A549 (cell line): ENCODE measurements at regions of chr4 and their contacts with region 1.

Region 1: GRCh38 chr4:1712216-1713002 is at the start of gene SLBP:
- DNase-seq: peak; percentile 92 to 97
- ATAC-seq: peak; percentile 86 to 92
- H3K4me3 ChIP-seq: peak within 1 kb of the TSS; percentile 85
- H3K27ac ChIP-seq: peak within 1 kb of the TSS; percentile 99 to 100
- H3K4me1 ChIP-seq: peaks cover 40% of the 10 kb centered on the region
- CTCF ChIP-seq: no peak
- EP300 ChIP-seq: no peak
- POLR2A ChIP-seq: peak; percentile 87
- RAD21 ChIP-seq: no peak
- polyA plus RNA-seq, gene SLBP: 66.7 and 89.9 TPM in 2 replicates

Region 2: DNA sequence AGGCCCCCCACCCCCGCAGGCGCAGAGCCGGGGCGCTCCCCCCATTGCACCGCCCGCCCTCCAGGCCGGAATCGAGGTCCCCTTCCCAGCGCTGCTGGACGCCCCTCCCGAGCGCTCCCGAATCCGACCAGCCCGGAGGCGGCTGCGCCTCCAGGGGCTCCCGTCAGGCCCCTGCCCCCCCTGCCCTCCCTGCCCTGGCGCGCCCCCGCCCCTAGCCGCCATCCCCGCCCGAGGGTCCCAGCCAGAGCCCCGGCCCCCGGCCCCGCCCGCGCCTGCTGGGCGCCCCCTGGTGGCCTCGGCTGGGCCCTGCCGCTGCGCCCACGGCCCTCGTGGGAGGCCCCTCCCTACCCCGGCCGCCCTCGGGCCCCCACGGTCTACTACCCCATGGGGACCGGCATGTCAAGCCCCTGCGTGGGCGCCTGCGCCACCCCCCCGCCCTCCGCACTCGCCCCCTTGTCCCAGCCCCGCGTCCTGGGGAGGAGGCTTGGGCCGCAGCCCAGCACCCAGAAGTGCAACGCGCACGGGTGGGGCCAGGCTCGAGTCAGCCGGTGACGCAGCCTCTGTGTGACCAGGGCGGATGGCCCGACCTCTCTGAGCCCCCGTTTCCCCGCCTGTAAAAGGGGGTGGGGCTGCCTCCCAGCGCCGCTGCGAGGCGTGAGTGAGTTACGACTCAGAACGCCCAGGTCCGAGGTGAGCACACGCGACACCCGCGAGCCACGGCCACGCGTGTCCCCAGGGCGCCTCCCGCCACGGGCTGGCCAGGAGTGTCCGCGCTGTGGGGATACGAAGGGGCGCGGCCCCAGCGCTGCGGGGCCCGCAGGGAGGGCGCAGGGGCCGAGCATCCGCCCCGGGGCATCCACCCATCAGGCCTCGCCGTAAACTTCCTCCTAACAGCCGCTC is 133.2 kb before region 1 on chr4:
- CTCF ChIA-PET with region 1: no interaction called
- POLR2A ChIA-PET with region 1: no interaction called
- DNase-seq: peak; percentile 72 to 83
- ATAC-seq: peak; percentile 64 to 82
- H3K4me3 ChIP-seq: peak overlapping the region; percentile 60
- H3K27ac ChIP-seq: peak overlapping the region; percentile 89 to 99
- H3K4me1 ChIP-seq: peaks cover 8% of the 10 kb centered on the region; the same call in 2 of the 3 replicates
- CTCF ChIP-seq: peak; percentile 72
- EP300 ChIP-seq: no peak
- POLR2A ChIP-seq: peak; percentile 54; the same call in 1 of the 2 replicates
- RAD21 ChIP-seq: peak in 1 of 2 experiments; percentile 24; a peak in 1 of 5 replicates

Region 3: GRCh38 chr4:1726146-1726934 is 13.9 kb after region 1 on chr4:
- CTCF ChIA-PET with region 1: interaction called, 17 read pairs
- POLR2A ChIA-PET with region 1: interaction called, 20 read pairs
- DNase-seq: peak; percentile 69 to 84
- ATAC-seq: peak; percentile 58 to 66
- H3K4me3 ChIP-seq: no peak overlapping the region
- H3K27ac ChIP-seq: peak overlapping the region; percentile 84 to 92
- H3K4me1 ChIP-seq: peaks cover 52% of the 10 kb centered on the region
- CTCF ChIP-seq: peak; percentile 82
- EP300 ChIP-seq: no peak
- POLR2A ChIP-seq: no peak
- RAD21 ChIP-seq: peak; percentile 42 to 43; a peak in 4 of 5 replicates